PC-9 (cell line): ENCODE measurements at regions of chr1 and their contacts with region 1.

Region 1: DNA sequence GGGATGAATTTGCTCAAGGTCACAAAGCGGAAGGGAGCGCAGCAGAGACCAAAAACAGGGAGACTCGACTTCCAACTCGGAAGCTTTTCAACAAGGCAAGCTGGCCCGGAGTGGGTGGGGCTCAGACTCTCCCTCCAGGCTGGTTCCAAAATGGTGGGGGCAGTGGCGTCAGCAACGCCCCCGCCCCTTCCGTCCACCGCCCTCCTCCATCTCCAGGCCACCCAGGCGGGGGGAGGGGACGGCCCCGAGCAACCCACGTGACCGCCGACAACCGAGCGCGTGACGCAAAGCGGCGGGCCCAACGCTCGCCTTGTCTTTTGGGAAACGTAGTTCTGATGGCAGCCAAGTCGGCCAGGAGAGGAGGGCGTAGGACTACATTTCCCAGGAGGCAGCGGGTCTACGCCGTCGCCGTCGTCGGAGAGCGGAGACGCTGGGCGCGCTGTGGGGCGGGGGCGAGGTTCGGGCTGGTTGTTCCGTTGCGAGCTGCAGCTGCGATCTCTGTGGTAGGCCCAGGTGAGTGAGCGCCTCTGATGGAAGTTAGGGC is at the start of gene THRAP3:
- DNase-seq: peak; percentile 97 to 100
- H3K4me3 ChIP-seq: peak within 1 kb of the TSS; percentile 95
- H3K27ac ChIP-seq: peak within 1 kb of the TSS; percentile 86
- H3K4me1 ChIP-seq: peaks cover 12% of the 10 kb centered on the region
- H3K27me3 ChIP-seq: no peaks in the 10 kb centered on the region
- CTCF ChIP-seq: no peak
- total RNA-seq, gene THRAP3: 83.2 and 143 TPM in 2 replicates

Region 2: GRCh38 chr1:35825255-35825654 is 398.8 kb before region 1 on chr1:
- CTCF ChIA-PET with region 1: no interaction called
- POLR2A ChIA-PET with region 1: interaction called, 13 read pairs
- intact Hi-C with region 1: no loop called
- DNase-seq: no peak
- H3K4me3 ChIP-seq: no peak overlapping the region
- H3K27ac ChIP-seq: no peak overlapping the region
- H3K4me1 ChIP-seq: no peaks in the 10 kb centered on the region
- H3K27me3 ChIP-seq: no peaks in the 10 kb centered on the region
- CTCF ChIP-seq: no peak

Region 3: GRCh38 chr1:36099681-36100341 is 124.3 kb before region 1 on chr1:
- CTCF ChIA-PET with region 1: no interaction called
- POLR2A ChIA-PET with region 1: no interaction called
- intact Hi-C with region 1: loop called (anchors 1 kb)
- DNase-seq: peak; percentile 71 to 94
- H3K4me3 ChIP-seq: no peak overlapping the region
- H3K27ac ChIP-seq: no peak overlapping the region
- H3K4me1 ChIP-seq: peaks cover 4% of the 10 kb centered on the region; the same call in 1 of the 2 replicates
- H3K27me3 ChIP-seq: no peaks in the 10 kb centered on the region
- CTCF ChIP-seq: peak; percentile 91

Region 4: DNA sequence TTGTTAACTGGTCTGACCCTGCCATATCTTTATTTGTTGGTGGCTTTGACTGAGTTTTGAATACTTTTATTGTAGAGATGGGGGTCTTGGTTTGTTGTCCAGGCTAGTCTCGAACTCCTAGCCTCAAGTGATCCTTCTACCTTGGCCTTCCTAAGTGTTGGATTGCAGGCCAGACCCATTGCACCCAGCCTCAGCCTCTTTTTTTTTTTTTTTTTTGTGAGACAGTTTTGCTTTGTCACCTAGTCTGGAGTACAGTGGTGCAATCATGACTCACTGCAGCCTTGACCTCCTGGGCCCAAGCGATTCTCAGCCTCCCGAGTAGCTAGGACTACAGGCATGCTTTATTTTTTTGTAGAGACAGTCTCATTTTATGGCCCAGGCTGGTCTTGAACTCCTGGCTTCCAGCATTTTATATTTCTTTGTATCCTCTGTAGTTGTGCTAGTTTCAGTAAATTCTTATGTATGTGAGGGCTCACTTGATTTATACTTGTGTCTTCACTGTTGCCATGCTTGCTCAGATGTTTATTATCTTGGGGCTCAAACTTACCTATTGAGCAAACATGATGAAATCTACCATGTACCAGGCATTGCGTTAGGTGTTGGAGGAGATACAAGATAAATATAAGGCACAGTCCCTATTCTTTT is 24.3 kb after region 1 on chr1:
- CTCF ChIA-PET with region 1: interaction called, 9 read pairs
- POLR2A ChIA-PET with region 1: interaction called, 4 read pairs
- intact Hi-C with region 1: loop called (anchors 1 kb)
- DNase-seq: peak; percentile 79 to 88
- H3K4me3 ChIP-seq: no peak overlapping the region
- H3K27ac ChIP-seq: peak overlapping the region; percentile 90
- H3K4me1 ChIP-seq: peaks cover 66% of the 10 kb centered on the region
- H3K27me3 ChIP-seq: no peaks in the 10 kb centered on the region
- CTCF ChIP-seq: no peak

Region 5: DNA sequence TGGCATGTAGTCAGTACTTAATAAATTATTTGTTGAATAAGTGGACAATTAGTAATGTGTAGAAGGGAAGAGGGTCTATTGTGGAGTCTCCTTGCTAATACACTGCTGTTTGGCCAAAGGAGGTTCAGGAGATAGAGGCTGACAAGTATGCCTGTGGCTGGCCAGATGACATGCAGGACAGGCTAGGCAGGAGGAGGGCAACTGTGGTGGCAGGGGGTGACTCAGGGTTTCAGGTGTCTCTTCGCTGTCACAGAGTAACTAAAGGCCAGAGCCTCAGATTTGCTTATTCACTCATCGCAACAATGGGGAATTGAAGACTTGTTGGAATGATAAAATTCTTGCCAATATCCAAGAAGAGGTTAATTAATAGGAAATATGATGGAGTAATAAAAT is 33.3 kb after region 1 on chr1:
- CTCF ChIA-PET with region 1: interaction called, 3 read pairs
- POLR2A ChIA-PET with region 1: no interaction called
- intact Hi-C with region 1: loop called (anchors 1 kb)
- DNase-seq: peak; percentile 85 to 86
- H3K4me3 ChIP-seq: peak overlapping the region; percentile 35; the same call in 1 of the 2 replicates
- H3K27ac ChIP-seq: peak overlapping the region; percentile 99
- H3K4me1 ChIP-seq: peaks cover 54% of the 10 kb centered on the region
- H3K27me3 ChIP-seq: no peaks in the 10 kb centered on the region
- CTCF ChIP-seq: no peak

Region 6: DNA sequence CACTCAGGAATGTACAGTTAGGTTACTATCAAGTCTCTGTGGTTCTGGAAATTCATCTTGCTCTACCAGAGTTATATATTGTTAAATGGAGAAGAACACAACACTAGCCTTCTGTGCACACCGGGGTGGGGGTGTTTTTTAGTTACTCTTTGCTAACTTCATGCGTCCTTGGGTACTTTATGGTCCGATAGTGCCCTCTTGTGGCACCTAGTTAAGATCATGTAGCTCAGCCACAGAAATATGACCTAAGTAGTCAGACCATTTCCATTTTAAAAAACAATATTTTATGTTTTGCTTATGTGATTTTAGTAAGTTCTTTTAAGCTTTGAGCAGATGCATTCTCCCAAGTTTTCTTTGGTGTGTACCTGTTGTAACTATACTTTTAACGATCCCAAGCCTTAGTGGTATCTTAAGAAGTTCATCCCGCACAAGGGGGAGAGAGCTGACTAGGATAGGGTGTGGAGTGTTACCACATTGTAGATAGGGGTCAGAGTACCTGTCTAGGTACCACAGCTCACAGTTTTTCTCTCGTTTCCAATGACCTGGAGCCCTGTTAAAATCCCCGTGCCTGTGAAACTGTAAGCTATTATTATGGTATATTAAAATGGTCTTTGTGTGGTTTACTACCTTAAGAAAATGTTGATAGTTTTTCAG is 61.5 kb after region 1 on chr1:
- CTCF ChIA-PET with region 1: interaction called, 11 read pairs
- POLR2A ChIA-PET with region 1: interaction called, 5 read pairs
- intact Hi-C with region 1: loop called (anchors 2 kb)
- DNase-seq: peak; percentile 56 to 73
- H3K4me3 ChIP-seq: no peak overlapping the region
- H3K27ac ChIP-seq: peak overlapping the region; percentile 31; the same call in 1 of the 2 replicates
- H3K4me1 ChIP-seq: no peaks in the 10 kb centered on the region
- H3K27me3 ChIP-seq: no peaks in the 10 kb centered on the region
- CTCF ChIP-seq: peak; percentile 85

Region 7: GRCh38 chr1:36300526-36300925 is 76.5 kb after region 1 on chr1:
- CTCF ChIA-PET with region 1: interaction called, 12 read pairs
- POLR2A ChIA-PET with region 1: no interaction called
- intact Hi-C with region 1: no loop called
- DNase-seq: peak in 1 of 2 experiments; percentile 60
- H3K4me3 ChIP-seq: no peak overlapping the region
- H3K27ac ChIP-seq: peak overlapping the region; percentile 89
- H3K4me1 ChIP-seq: peaks cover 32% of the 10 kb centered on the region
- H3K27me3 ChIP-seq: no peaks in the 10 kb centered on the region
- CTCF ChIP-seq: no peak